ENCODE measurements at regions of chr7 and their contacts with region 1.

Region 1: DNA sequence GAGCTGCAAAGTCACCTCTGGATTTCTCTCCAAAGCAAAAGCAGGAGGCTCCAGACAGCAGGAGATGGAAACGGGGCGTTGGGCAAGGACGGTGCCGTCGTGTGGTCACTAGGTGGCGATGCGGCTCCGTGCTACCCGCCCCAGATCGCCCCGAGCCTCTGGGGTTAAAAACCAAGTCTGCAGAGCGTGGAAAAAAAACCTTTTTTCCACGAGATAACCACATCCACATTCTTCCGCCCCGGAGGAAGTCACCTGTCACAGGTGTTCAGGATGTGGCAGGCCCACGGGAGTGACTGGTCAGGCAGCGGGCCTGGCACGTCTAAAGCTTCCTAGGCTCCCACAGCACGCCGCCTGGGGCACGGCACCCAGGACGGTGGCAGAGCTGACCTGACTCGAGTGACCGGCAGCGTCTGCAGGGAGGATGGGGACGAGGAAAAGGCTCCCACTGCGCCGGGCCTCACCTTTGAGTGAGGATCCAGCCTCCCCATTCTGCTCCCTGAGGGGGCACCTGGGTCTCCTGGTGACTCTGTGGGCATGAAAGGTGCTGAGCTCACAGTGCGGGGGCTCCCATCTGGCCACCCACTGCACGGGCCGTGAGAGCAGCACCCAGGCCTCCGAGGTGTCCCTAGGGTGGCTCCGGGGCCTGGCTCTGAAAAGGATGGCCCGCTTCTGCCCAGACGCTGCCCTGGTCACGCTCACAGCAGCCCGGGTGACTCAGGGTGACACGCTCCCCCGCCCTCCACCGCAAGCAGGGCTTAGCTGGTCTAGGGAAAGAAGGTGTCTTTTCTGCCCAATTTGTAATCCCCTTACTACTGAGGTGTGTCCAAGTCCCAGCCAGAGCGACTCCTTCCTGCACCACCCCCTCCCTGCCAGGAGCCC is 71.3 kb upstream of the TNRC18 start:
- DNase-seq: peak; percentile 82
- H3K4me3 ChIP-seq: peak overlapping the region; percentile 56
- H3K27ac ChIP-seq: peak overlapping the region; percentile 91
- H3K4me1 ChIP-seq: peaks cover 43% of the 10 kb centered on the region
- H3K27me3 ChIP-seq: no peaks in the 10 kb centered on the region
- CTCF ChIP-seq: peak; percentile 97

Region 2: DNA sequence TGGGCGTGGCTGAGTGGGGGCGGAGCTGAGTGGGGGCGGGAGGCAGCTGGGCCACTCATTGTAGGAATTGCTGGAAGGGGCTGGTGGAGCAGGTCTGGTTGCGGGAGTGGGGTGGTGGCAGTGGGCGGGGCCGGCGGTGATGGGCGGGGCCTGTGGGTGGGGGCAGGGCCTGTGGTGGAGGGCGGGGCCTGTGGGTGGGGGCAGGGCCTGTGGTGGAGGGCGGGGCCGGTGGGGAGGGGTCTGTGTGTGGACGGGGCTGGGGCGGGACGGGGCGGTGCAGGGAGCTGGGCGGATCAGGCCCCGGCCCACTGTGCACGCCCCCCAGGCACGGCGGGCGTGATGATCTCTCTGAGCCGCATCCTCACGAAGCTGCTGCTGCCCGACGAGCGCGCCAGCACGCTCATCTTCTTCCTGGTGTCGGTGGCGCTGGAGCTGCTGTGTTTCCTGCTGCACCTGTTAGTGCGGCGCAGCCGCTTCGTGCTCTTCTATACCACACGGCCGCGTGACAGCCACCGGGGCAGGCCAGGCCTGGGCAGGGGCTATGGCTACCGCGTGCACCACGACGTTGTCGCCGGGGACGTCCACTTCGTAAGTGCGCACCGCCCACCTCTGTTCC is 198.2 kb before region 1 on chr7:
- intact Hi-C with region 1: no loop called
- DNase-seq: no peak
- H3K4me3 ChIP-seq: no peak overlapping the region
- H3K27ac ChIP-seq: no peak overlapping the region
- H3K4me1 ChIP-seq: no peaks in the 10 kb centered on the region
- H3K27me3 ChIP-seq: peaks cover 38% of the 10 kb centered on the region
- CTCF ChIP-seq: no peak

Region 3: GRCh38 chr7:5557920-5558401 is 63.0 kb after region 1 on chr7:
- intact Hi-C with region 1: loop called (anchors 2 kb)
- DNase-seq: peak; percentile 85
- H3K4me3 ChIP-seq: peak overlapping the region; percentile 80
- H3K27ac ChIP-seq: peak overlapping the region; percentile 100
- H3K4me1 ChIP-seq: peaks cover 70% of the 10 kb centered on the region
- H3K27me3 ChIP-seq: peaks cover 2% of the 10 kb centered on the region
- CTCF ChIP-seq: no peak

Region 4: GRCh38 chr7:5677538-5678294 is 182.8 kb after region 1 on chr7:
- intact Hi-C with region 1: loop called (anchors 10 kb)
- DNase-seq: peak; percentile 73
- H3K4me3 ChIP-seq: no peak overlapping the region
- H3K27ac ChIP-seq: peak overlapping the region; percentile 74
- H3K4me1 ChIP-seq: peaks cover 68% of the 10 kb centered on the region
- H3K27me3 ChIP-seq: no peaks in the 10 kb centered on the region
- CTCF ChIP-seq: peak; percentile 81